ENCODE measurements at regions of chr22 and their contacts with region 1.

Region 1: DNA sequence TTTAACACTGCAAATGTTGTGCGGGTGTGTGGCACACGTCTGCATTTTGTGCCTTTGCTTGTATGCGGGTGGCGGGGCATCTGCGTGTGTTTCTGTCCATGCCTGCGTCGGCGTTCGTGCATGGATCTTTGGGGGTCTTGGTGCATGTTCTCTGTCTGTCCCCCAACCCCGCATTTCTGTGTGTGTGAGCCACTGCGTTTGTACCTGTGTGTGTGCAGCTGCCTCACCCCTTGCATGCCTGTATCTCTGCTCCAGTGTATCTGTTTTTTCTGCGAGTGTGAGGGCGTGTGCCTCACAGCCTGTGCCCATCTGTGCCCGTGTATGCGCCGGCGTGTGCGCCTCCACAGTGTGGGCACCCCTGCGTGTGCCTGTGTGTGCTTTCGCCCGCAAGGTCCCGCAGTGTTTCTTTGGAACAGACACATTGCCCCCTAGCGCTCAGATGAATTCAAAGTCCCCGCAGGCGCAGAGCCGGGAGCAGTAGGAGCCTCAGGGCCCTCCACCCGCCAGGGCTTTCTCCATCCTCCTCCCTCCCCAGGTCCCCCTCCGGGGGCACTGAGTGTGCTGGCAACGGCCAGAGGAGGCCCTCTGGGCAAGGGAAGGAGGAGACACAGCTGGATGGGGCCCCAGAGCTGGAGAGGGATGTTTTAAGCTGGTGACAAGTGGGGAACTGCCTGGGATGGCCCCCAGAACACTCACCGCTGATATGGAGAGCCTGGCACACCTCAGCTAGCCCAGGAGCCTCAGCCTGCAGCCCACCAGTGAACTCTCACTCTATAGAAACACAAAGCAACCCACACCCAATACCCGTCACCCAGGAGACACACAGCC is 3.1 kb upstream of the MN1 start:
- DNase-seq: peak; percentile 67
- H3K4me3 ChIP-seq: no peak overlapping the region
- H3K27ac ChIP-seq: no peak overlapping the region
- H3K4me1 ChIP-seq: peaks cover 18% of the 10 kb centered on the region
- H3K27me3 ChIP-seq: peaks cover 8 to 9% of the 10 kb centered on the region in 2 experiments
- CTCF ChIP-seq: peak; percentile 64 to 78
- POLR2A ChIP-seq: no peak

Region 2: DNA sequence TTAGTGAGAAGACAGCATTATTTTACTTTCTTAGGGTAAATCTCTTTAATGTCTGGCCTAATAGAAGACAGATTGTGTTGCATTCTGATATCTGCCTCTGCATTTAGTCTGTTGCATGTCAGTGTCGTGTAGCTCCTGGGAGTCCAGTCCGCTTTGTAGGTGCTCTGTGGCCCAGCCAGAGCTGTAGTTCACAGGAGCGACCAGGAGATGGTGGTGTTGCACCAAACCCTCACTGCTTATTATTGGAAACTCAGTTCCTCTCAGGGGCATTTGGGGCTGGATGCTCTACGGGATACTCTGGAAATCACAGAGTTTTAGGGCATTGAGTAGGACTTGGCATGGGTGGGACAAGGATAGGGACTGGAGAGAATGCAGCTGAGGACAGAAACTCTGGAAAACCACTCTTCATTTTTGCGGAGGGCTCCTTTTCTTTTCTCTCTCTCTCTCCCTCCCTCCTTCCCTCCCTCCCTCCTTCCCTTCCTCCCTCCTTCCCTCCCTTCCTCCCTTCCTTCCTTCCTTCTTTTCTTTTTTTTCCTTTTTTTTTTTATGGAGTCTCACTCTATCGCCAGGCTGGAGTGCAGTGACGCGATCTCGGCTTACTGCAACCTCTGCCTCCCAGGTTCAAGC is 1125.6 kb before region 1 on chr22:
- CTCF ChIA-PET with region 1: no interaction called
- POLR2A ChIA-PET with region 1: no interaction called
- dilution Hi-C with region 1: no loop called
- intact Hi-C with region 1: loop called (anchors 1 kb)
- DNase-seq: peak; percentile 84
- H3K4me3 ChIP-seq: no peak overlapping the region
- H3K27ac ChIP-seq: no peak overlapping the region
- H3K4me1 ChIP-seq: peaks cover 13% of the 10 kb centered on the region
- H3K27me3 ChIP-seq: no peaks in the 10 kb centered on the region
- CTCF ChIP-seq: peak; percentile 93 to 96
- POLR2A ChIP-seq: no peak

Region 3: DNA sequence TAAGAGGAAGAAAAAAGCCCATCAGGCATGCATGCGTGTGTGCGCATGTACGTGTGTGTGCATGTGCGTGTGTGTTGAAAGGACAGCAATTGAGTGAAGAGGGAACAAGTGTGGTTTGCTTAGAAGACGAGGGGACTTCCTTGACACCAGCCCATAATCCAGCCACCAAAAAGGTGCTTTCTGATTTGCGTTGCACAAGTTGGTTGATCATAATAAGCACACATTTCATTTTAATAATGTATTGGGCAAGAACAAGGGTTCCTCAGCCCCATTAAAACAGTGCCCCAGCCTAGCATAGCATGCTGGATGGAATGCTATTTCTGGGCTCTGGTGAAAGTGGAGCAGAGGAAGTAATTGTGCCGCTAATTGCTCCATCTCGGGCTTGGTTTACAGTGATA is 654.1 kb before region 1 on chr22:
- CTCF ChIA-PET with region 1: no interaction called
- POLR2A ChIA-PET with region 1: no interaction called
- dilution Hi-C with region 1: no loop called
- intact Hi-C with region 1: loop called (anchors 5 kb)
- DNase-seq: no peak
- H3K4me3 ChIP-seq: no peak overlapping the region
- H3K27ac ChIP-seq: no peak overlapping the region
- H3K4me1 ChIP-seq: peaks cover 35% of the 10 kb centered on the region
- H3K27me3 ChIP-seq: no peaks in the 10 kb centered on the region
- CTCF ChIP-seq: no peak
- POLR2A ChIP-seq: no peak

Region 4: DNA sequence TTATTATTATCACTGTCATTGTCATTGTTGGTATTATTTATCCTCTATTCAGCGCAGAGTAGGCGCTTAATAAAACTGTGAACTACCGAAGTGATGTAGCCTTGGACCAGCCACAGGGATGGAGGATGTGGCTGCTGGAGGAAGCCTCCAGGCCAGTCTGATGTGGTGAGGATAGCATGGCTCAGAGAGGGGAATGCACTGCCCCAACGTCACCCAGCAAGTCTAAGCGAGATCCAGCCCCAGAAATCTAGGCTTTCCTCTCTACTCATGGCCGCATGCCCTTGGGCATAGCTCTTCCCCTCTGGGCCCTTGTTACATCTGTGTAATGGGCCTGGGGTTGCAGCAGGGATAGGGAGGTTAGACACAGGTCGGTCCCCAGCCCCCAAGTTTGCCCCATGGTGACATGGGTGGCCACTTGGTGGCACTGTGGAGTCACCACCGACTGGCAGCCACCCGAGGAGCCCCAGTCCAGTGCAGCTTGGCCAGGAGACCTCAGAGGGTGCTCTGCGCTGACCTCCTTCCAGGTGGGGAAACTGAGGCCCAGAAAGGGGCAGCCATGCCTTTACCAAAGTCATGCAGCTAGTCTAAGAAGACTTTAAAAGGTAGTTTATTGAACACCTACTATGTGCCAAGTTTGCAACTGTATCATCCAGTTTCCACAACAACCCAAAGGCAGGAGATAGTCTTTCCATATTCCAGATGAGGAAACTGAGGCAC is 398.9 kb before region 1 on chr22:
- CTCF ChIA-PET with region 1: interaction called, 8 read pairs
- POLR2A ChIA-PET with region 1: no interaction called
- dilution Hi-C with region 1: no loop called
- intact Hi-C with region 1: loop called (anchors 1 kb)
- DNase-seq: peak; percentile 43
- H3K4me3 ChIP-seq: no peak overlapping the region
- H3K27ac ChIP-seq: no peak overlapping the region
- H3K4me1 ChIP-seq: no peaks in the 10 kb centered on the region
- H3K27me3 ChIP-seq: peaks cover 0 to under 1% of the 10 kb centered on the region in 2 experiments
- CTCF ChIP-seq: peak; percentile 81 to 85
- POLR2A ChIP-seq: no peak

Region 5: GRCh38 chr22:27512283-27512761 is 292.4 kb before region 1 on chr22:
- CTCF ChIA-PET with region 1: no interaction called
- POLR2A ChIA-PET with region 1: no interaction called
- dilution Hi-C with region 1: no loop called
- intact Hi-C with region 1: loop called (anchors 10 kb)
- DNase-seq: peak; percentile 99
- H3K4me3 ChIP-seq: no peak overlapping the region
- H3K27ac ChIP-seq: peak overlapping the region; percentile 83
- H3K4me1 ChIP-seq: peaks cover 29% of the 10 kb centered on the region
- H3K27me3 ChIP-seq: no peaks in the 10 kb centered on the region
- CTCF ChIP-seq: no peak
- POLR2A ChIP-seq: no peak

Region 6: DNA sequence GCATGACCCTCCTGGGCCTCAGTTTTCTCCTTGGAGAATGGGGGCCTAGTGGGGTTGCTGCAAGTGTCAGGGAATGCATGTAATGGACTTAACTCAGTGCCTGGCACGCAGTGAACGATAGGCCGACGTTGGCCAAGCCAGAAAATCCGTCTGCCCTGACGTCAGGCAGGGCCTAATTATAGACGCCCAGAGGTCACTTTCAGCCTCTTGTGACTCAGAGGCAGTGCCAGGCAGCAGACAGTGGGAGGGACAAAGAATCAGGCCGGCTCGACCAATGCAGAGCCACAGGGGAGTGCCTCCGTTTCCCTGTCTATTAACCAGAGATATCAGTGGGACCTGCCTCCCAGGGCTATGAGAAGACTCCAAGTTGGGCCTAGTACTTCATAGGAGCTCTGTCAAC is 118.2 kb before region 1 on chr22:
- CTCF ChIA-PET with region 1: no interaction called
- POLR2A ChIA-PET with region 1: no interaction called
- dilution Hi-C with region 1: no loop called
- intact Hi-C with region 1: loop called (anchors 5 kb)
- DNase-seq: peak; percentile 87
- H3K4me3 ChIP-seq: no peak overlapping the region
- H3K27ac ChIP-seq: no peak overlapping the region
- H3K4me1 ChIP-seq: peaks cover 7% of the 10 kb centered on the region
- H3K27me3 ChIP-seq: peaks cover 0 to 5% of the 10 kb centered on the region in 2 experiments
- CTCF ChIP-seq: no peak
- POLR2A ChIP-seq: no peak

Region 7: GRCh38 chr22:27715106-27715505 is 89.6 kb before region 1 on chr22:
- CTCF ChIA-PET with region 1: no interaction called
- POLR2A ChIA-PET with region 1: no interaction called
- dilution Hi-C with region 1: no loop called
- intact Hi-C with region 1: no loop called
- DNase-seq: no peak
- H3K4me3 ChIP-seq: no peak overlapping the region
- H3K27ac ChIP-seq: no peak overlapping the region
- H3K4me1 ChIP-seq: peaks cover 11% of the 10 kb centered on the region
- H3K27me3 ChIP-seq: no peaks in the 10 kb centered on the region
- CTCF ChIP-seq: no peak
- POLR2A ChIP-seq: no peak

Region 8: GRCh38 chr22:27726697-27727449 is 77.8 kb before region 1 on chr22:
- CTCF ChIA-PET with region 1: no interaction called
- POLR2A ChIA-PET with region 1: no interaction called
- dilution Hi-C with region 1: no loop called
- intact Hi-C with region 1: no loop called
- DNase-seq: peak; percentile 79
- H3K4me3 ChIP-seq: peak overlapping the region in 1 of 3 experiments; percentile 5
- H3K27ac ChIP-seq: peak overlapping the region; percentile 25
- H3K4me1 ChIP-seq: peaks cover 17% of the 10 kb centered on the region
- H3K27me3 ChIP-seq: peaks cover 0 to 1% of the 10 kb centered on the region in 2 experiments
- CTCF ChIP-seq: no peak
- POLR2A ChIP-seq: no peak

Region 9: GRCh38 chr22:27790376-27791158 is 14.1 kb before region 1 on chr22:
- CTCF ChIA-PET with region 1: no interaction called
- POLR2A ChIA-PET with region 1: no interaction called
- dilution Hi-C with region 1: no loop called
- intact Hi-C with region 1: no loop called
- DNase-seq: no peak
- H3K4me3 ChIP-seq: no peak overlapping the region
- H3K27ac ChIP-seq: no peak overlapping the region
- H3K4me1 ChIP-seq: no peaks in the 10 kb centered on the region
- H3K27me3 ChIP-seq: peaks cover 0 to 15% of the 10 kb centered on the region in 2 experiments
- CTCF ChIP-seq: no peak
- POLR2A ChIP-seq: no peak

Region 10: GRCh38 chr22:27825174-27825573 is 20.5 kb after region 1 on chr22:
- CTCF ChIA-PET with region 1: no interaction called
- POLR2A ChIA-PET with region 1: no interaction called
- dilution Hi-C with region 1: no loop called
- intact Hi-C with region 1: no loop called
- DNase-seq: no peak
- H3K4me3 ChIP-seq: no peak overlapping the region
- H3K27ac ChIP-seq: no peak overlapping the region
- H3K4me1 ChIP-seq: no peaks in the 10 kb centered on the region
- H3K27me3 ChIP-seq: no peaks in the 10 kb centered on the region
- CTCF ChIP-seq: peak; percentile 39 to 45
- POLR2A ChIP-seq: no peak